AG04450 (cell line): ENCODE measurements at regions of chr1 and their contacts with region 1.

Region 1: GRCh38 chr1:19418503-19418971 is 66.8 kb downstream of the CAPZB start:
- DNase-seq: no peak
- H3K4me3 ChIP-seq: no peak overlapping the region
- H3K27ac ChIP-seq: peak overlapping the region; percentile 42
- H3K27me3 ChIP-seq: no peaks in the 10 kb centered on the region
- CTCF ChIP-seq: no peak

Region 2: DNA sequence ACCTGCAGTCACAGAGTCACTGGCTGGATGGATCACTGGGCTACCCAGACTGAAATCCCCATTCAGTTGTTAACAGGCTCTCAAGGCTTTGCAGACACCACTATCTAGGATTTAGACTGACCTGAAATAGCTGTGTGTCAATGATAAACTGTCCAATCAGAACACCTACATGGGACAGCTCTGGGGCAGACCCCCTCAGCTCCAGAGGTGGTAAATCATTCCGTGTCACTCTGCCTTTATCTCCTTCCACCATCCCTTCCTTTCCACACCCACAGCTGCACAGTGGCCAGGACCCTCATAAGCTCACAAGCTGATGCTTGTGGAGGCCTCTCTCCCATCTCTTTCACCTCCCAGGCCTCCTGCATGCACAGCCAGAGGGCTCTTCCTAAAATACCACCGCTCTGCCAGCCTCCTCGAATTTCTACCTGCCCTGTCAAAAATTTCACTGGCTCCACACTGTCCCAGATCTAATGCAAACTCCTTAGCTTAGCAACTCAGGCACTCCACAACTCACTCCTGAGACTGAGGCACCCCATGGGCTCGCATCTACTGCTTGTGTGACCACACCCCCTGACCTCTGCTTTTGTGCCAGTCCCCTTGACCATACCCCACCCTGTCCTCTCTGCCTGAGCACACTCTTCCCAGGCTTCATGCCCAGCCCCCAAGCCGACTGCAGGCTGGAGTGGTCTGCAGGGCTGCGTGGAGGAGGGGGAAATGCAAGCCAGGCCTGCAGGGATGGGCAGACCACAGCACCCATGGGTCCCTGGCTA is 61.0 kb after region 1 on chr1:
- CTCF ChIA-PET with region 1: no interaction called
- POLR2A ChIA-PET with region 1: interaction called, 17 read pairs
- DNase-seq: no peak
- H3K4me3 ChIP-seq: no peak overlapping the region
- H3K27ac ChIP-seq: no peak overlapping the region
- H3K27me3 ChIP-seq: no peaks in the 10 kb centered on the region
- CTCF ChIP-seq: no peak

Region 3: DNA sequence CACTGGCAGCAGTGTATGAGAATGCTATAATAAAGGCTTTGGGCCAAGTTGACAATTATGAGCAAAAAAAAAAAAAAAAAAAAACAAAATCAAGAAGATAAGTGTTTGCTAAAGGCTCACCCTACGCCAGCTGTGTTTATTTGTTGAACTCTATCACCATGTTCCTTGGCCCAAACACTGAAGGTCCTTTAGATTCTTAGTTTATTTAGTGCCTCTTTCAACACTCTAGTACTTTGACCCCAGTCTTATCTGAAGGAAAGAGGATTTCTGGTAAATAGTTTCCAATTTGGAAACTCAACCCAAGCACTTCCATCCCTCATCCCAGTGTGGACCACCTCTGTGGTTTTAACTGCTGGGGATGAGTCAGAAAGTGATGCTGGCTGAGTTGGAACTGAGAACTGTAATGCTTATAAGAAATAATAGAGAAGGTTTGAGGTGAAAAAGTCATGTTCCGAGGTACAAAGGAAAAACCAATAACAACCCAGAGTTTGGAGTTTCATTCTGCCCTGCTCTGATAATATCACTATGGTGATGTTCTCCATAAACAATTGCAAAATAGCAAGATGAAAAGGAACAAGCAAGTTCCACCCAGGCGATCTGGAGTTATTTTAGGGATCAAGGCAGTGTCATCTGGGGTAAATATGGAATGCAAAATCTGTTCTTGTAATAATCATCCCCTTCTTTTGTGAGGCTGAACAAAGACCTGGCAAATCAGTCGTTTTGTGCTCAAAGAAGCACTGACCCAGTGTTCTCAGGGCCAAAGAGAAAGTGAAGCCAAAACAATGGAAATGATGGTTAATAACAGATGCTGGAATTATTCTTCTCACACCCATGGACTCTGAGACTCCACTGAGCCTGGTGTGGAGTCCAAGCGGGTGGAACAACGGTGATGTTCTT is 86.5 kb after region 1 on chr1:
- CTCF ChIA-PET with region 1: no interaction called
- POLR2A ChIA-PET with region 1: no interaction called
- DNase-seq: peak; percentile 89
- H3K4me3 ChIP-seq: peak overlapping the region; percentile 20
- H3K27ac ChIP-seq: peak overlapping the region; percentile 95
- H3K27me3 ChIP-seq: no peaks in the 10 kb centered on the region
- CTCF ChIP-seq: no peak